CD4-positive, alpha-beta T cell (primary cell): ENCODE measurements at regions of chr2 and their contacts with region 1.

Region 1: DNA sequence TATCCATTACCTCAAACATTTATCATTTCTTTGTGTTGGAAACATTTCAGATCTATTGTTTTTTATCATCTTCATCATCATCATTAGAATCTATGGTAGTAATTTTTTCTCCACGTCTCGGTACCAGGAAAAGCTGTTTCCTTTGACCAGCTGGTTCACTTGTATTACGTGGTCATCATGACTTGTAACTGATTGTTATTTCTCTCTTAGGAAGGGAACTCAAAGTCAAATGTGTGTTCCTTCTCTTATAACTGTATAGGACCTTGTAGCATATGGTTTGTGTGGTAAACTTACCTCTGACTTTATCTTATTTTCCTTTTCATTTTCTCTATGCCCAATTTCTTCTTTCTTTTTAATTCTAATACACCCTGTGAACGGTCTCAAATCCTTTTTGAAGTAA is 16.5 kb downstream of the NCOA1 start:
- DNase-seq: no peak
- ATAC-seq: no peak
- H3K4me3 ChIP-seq: no peak overlapping the region
- H3K4me3 Mint-ChIP-seq: no peak overlapping the region
- H3K27ac ChIP-seq: no peak overlapping the region
- H3K27ac Mint-ChIP-seq: no peak overlapping the region
- H3K4me1 ChIP-seq: peaks cover 10% of the 10 kb centered on the region
- H3K4me1 Mint-ChIP-seq: peaks cover 81% of the 10 kb centered on the region
- H3K27me3 ChIP-seq: no peaks in the 10 kb centered on the region
- H3K27me3 Mint-ChIP-seq: no peaks in the 10 kb centered on the region
- CTCF ChIP-seq: no peak

Region 2: DNA sequence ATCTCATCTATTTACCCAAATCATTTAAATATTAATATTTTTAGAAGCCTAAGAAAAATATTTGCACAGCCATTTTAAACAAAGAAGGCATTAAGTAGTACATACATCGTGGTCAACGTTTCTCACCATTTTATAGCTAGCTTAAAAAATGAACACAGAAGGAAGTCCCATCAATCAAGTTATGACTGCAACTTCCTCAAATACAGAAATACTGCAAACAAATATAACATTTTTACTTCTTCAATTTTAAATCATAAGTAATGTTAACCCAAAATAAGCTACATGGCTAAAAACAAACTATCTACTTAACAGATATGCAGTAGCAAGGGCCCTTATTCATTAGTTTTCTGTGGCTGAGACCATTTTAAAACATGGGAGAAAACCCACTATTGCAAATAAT is 177.8 kb before region 1 on chr2:
- CTCF ChIA-PET with region 1: no interaction called
- POLR2A ChIA-PET with region 1: no interaction called
- intact Hi-C with region 1: no loop called
- DNase-seq: peak in 1 of 14 experiments; percentile 20
- ATAC-seq: no peak
- H3K4me3 ChIP-seq: no peak overlapping the region
- H3K4me3 Mint-ChIP-seq: peak overlapping the region; percentile 42
- H3K27ac ChIP-seq: no peak overlapping the region
- H3K27ac Mint-ChIP-seq: peak overlapping the region; percentile 48
- H3K4me1 ChIP-seq: peaks cover 12% of the 10 kb centered on the region
- H3K4me1 Mint-ChIP-seq: peaks cover 53% of the 10 kb centered on the region
- H3K27me3 ChIP-seq: no peaks in the 10 kb centered on the region
- H3K27me3 Mint-ChIP-seq: no peaks in the 10 kb centered on the region
- CTCF ChIP-seq: no peak

Region 3: DNA sequence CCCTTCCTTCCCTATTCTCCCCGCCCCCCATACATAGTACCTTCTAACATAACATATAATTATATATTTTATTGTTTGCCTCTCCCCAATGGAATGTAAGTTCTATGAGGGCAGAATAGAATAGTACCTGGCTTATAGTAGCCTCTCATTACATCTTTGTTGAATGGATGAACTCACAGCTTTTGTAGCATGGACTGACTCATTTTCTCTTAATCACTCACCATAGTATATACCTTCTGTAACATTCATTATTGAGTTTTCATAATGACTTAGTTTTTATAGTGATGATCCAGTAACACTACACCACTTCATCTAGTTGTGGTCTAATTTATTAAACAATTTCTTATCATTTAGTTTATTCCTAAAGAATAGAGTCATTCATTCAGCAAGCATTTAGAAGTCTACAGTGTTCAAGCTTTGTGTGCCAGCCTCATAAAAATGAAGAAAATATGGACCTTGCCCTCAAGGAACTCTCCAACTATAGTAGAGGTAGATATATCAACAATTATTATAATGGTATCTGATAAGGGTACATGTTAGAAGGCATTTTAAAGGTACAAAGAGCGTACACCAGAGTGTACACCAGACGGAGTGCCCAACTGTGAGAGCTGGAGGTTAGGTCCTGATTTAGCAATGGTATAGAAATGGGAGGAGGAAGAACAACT is 14.6 kb after region 1 on chr2:
- CTCF ChIA-PET with region 1: interaction called, 3 read pairs
- POLR2A ChIA-PET with region 1: no interaction called
- intact Hi-C with region 1: loop called in 1 of 2 experiments (anchors 2 kb)
- DNase-seq: no peak
- ATAC-seq: no peak
- H3K4me3 ChIP-seq: no peak overlapping the region
- H3K4me3 Mint-ChIP-seq: no peak overlapping the region
- H3K27ac ChIP-seq: no peak overlapping the region
- H3K27ac Mint-ChIP-seq: no peak overlapping the region
- H3K4me1 ChIP-seq: no peaks in the 10 kb centered on the region
- H3K4me1 Mint-ChIP-seq: peaks cover 61% of the 10 kb centered on the region
- H3K27me3 ChIP-seq: no peaks in the 10 kb centered on the region
- H3K27me3 Mint-ChIP-seq: no peaks in the 10 kb centered on the region
- CTCF ChIP-seq: no peak